Naive thymus-derived CD4-positive, alpha-beta T cell (primary cell): ENCODE measurements at regions of chr7 and their contacts with region 1.

Region 1: GRCh38 chr7:111089822-111090426 is 1.0 kb upstream of the LRRN3 start:
- DNase-seq: peak in 4 of 9 donors; percentile 43 to 50 (median 47)
- ATAC-seq: peak; percentile 70
- H3K4me3 ChIP-seq: peak overlapping the region; percentile 58
- H3K4me3 Mint-ChIP-seq: peak overlapping the region; percentile 84 to 99 (median 98)
- H3K27ac ChIP-seq: no peak overlapping the region
- H3K27ac Mint-ChIP-seq: peak overlapping the region in 5 of 9 donors; percentile 25 to 97 (median 93)
- H3K4me1 ChIP-seq: peaks cover under 1 to 13% of the 10 kb centered on the region in 2 donors
- H3K4me1 Mint-ChIP-seq: peaks cover 6 to 77% (median 60%) of the 10 kb centered on the region in 7 donors
- H3K27me3 ChIP-seq: no peaks in the 10 kb centered on the region
- H3K27me3 Mint-ChIP-seq: no peaks in the 10 kb centered on the region

Region 2: GRCh38 chr7:110595690-110596325 is 494.1 kb before region 1 on chr7:
- CTCF ChIA-PET with region 1: interaction called, 7 read pairs
- POLR2A ChIA-PET with region 1: interaction called, 4 read pairs
- intact Hi-C with region 1: loop called in 1 of 2 experiments (anchors 1 kb)
- DNase-seq: peak in 5 of 9 donors; percentile 16 to 39 (median 21)
- ATAC-seq: no peak
- H3K4me3 ChIP-seq: no peak overlapping the region
- H3K4me3 Mint-ChIP-seq: no peak overlapping the region
- H3K27ac ChIP-seq: no peak overlapping the region
- H3K27ac Mint-ChIP-seq: no peak overlapping the region
- H3K4me1 ChIP-seq: no peaks in the 10 kb centered on the region
- H3K4me1 Mint-ChIP-seq: peaks cover 0 to 15% (median 0%) of the 10 kb centered on the region in 7 donors
- H3K27me3 ChIP-seq: no peaks in the 10 kb centered on the region
- H3K27me3 Mint-ChIP-seq: peaks cover 0 to 11% (median 0%) of the 10 kb centered on the region in 5 donors

Region 3: DNA sequence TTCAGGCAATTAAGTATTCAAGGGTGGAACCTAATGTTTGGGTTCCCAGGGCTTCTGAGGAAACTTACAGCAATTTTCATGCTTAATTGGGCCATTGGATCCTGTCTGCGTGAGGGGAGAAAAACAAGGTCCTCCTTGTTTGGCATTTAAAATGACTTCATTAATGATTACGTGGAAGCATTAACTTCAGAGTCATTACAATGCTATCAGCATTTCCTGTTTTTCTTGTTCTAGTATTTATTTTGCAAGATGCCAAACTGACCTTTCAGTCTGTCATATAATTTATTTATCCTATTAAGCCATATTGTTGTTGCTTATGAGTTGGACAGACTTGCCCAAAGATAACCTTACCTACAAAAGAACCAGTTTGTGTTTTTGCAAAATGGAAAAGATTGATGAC is 323.1 kb before region 1 on chr7:
- CTCF ChIA-PET with region 1: no interaction called
- POLR2A ChIA-PET with region 1: no interaction called
- intact Hi-C with region 1: no loop called
- DNase-seq: no peak
- ATAC-seq: no peak
- H3K4me3 ChIP-seq: no peak overlapping the region
- H3K4me3 Mint-ChIP-seq: no peak overlapping the region
- H3K27ac ChIP-seq: no peak overlapping the region
- H3K27ac Mint-ChIP-seq: no peak overlapping the region
- H3K4me1 ChIP-seq: no peaks in the 10 kb centered on the region
- H3K4me1 Mint-ChIP-seq: peaks cover 0 to 2% (median 0%) of the 10 kb centered on the region in 7 donors
- H3K27me3 ChIP-seq: no peaks in the 10 kb centered on the region
- H3K27me3 Mint-ChIP-seq: peaks cover 0 to 5% (median 0%) of the 10 kb centered on the region in 5 donors

Region 4: DNA sequence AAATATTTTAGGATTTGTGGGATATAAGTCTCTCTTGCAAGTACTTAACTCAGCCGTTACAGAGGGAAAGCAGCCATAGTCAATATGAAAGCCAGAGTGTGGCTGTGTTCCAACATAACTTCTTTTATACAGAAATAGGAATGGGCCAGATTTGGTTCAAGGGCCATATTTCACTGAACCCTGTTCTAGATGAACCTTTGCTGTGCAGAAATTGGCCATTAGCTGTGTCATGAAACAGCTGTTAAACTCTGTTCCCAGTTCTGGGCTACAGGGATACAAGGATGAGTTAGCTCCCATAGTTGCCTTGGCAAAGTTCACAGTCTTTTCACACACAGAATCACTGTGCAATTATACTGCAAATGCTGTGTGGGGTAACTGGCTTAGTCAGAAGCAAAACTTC is 212.9 kb before region 1 on chr7:
- CTCF ChIA-PET with region 1: no interaction called
- POLR2A ChIA-PET with region 1: no interaction called
- intact Hi-C with region 1: loop called in 1 of 2 experiments (anchors 5 kb)
- DNase-seq: no peak
- ATAC-seq: no peak
- H3K4me3 ChIP-seq: no peak overlapping the region
- H3K4me3 Mint-ChIP-seq: no peak overlapping the region
- H3K27ac ChIP-seq: no peak overlapping the region
- H3K27ac Mint-ChIP-seq: peak overlapping the region in 1 of 9 donors; percentile 37
- H3K4me1 ChIP-seq: no peaks in the 10 kb centered on the region
- H3K4me1 Mint-ChIP-seq: peaks cover 0 to 16% (median under 1%) of the 10 kb centered on the region in 7 donors
- H3K27me3 ChIP-seq: no peaks in the 10 kb centered on the region
- H3K27me3 Mint-ChIP-seq: no peaks in the 10 kb centered on the region

Region 5: DNA sequence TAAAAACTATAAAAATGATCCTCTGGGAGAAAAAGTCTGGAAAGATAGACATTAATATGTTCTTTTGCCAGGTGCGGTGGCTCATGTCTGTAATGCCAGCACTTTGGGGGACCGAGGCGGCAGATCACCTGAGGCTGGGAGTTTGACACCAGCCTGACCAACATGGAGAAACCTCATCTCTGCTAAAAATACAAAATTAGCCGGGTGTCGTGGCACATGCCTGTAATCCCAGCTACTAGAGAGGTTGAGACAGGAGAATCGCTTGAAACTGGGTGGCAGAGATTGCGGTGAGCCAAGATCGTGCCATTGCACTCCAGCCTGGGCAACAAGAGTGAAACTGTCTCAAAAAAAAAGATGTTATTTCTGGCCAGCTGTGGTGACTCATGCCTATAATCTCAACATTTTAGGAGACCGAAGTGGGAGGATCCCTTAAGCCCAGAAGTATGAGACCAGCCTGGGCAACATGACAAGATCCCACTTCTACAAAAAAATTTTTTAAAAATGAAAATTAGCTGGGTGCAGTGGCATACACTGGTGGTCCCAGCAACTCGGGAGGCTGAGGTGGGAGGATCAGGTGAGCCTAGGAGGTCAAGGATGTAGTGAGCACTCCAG is 100.9 kb before region 1 on chr7:
- CTCF ChIA-PET with region 1: interaction called, 3 read pairs
- POLR2A ChIA-PET with region 1: interaction called, 10 read pairs
- intact Hi-C with region 1: no loop called
- DNase-seq: no peak
- ATAC-seq: no peak
- H3K4me3 ChIP-seq: no peak overlapping the region
- H3K4me3 Mint-ChIP-seq: no peak overlapping the region
- H3K27ac ChIP-seq: no peak overlapping the region
- H3K27ac Mint-ChIP-seq: no peak overlapping the region
- H3K4me1 ChIP-seq: peaks cover 0 to 15% of the 10 kb centered on the region in 2 donors
- H3K4me1 Mint-ChIP-seq: peaks cover 15 to 40% (median 33%) of the 10 kb centered on the region in 7 donors
- H3K27me3 ChIP-seq: no peaks in the 10 kb centered on the region
- H3K27me3 Mint-ChIP-seq: no peaks in the 10 kb centered on the region

Region 6: GRCh38 chr7:111012799-111013675 is 76.9 kb before region 1 on chr7:
- CTCF ChIA-PET with region 1: interaction called, 3 read pairs
- POLR2A ChIA-PET with region 1: interaction called, 14 read pairs
- intact Hi-C with region 1: loop called (anchors 1 kb)
- DNase-seq: peak in 8 of 9 donors; percentile 44 to 76 (median 70)
- ATAC-seq: peak; percentile 86
- H3K4me3 ChIP-seq: peak overlapping the region; percentile 50
- H3K4me3 Mint-ChIP-seq: peak overlapping the region in 9 of 10 donors; percentile 59 to 83 (median 76)
- H3K27ac ChIP-seq: peak overlapping the region; percentile 82
- H3K27ac Mint-ChIP-seq: peak overlapping the region in 6 of 9 donors; percentile 84 to 96 (median 90)
- H3K4me1 ChIP-seq: peaks cover 13 to 77% of the 10 kb centered on the region in 2 donors
- H3K4me1 Mint-ChIP-seq: peaks cover 38 to 76% (median 48%) of the 10 kb centered on the region in 7 donors
- H3K27me3 ChIP-seq: no peaks in the 10 kb centered on the region
- H3K27me3 Mint-ChIP-seq: no peaks in the 10 kb centered on the region

Region 7: DNA sequence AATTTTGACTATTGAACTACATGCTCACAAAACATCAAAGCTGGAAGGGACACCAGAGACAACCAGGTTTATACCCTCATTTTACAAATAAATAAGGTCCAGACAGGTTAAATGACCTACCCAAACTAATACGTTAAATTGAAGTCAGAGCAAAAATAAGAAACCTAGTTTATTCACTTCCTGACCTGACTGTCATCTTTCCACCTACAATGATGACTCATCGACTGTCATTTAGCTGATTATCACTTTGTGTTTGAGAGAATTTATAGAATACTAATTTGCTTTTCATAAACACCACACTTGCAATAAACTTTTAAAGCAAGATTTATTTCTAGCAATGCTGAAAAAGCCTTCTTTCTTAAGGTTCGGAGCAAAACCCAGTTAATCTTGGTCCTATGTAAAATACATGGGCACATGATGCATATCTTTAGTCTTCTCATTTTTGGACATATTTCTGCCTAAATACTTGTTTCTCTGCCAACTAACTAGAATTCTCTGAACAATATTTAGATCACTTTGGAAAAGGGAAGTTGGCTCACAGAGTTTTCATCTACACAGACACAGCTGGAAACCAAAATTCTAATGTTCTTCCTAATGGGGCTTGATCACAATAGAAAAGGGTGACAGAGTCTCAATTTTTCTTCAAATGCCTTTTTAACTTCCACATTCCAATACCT is 15.7 kb before region 1 on chr7:
- CTCF ChIA-PET with region 1: interaction called, 3 read pairs
- POLR2A ChIA-PET with region 1: interaction called, 69 read pairs
- intact Hi-C with region 1: loop called in 1 of 2 experiments (anchors 1 kb)
- DNase-seq: no peak
- ATAC-seq: no peak
- H3K4me3 ChIP-seq: no peak overlapping the region
- H3K4me3 Mint-ChIP-seq: peak overlapping the region in 6 of 10 donors; percentile 11 to 40 (median 19)
- H3K27ac ChIP-seq: no peak overlapping the region
- H3K27ac Mint-ChIP-seq: peak overlapping the region in 4 of 9 donors; percentile 4 to 78 (median 34)
- H3K4me1 ChIP-seq: peaks cover 5 to 34% of the 10 kb centered on the region in 2 donors
- H3K4me1 Mint-ChIP-seq: peaks cover 10 to 82% (median 73%) of the 10 kb centered on the region in 7 donors
- H3K27me3 ChIP-seq: no peaks in the 10 kb centered on the region
- H3K27me3 Mint-ChIP-seq: no peaks in the 10 kb centered on the region

Region 8: GRCh38 chr7:111138196-111138569 is 48.3 kb after region 1 on chr7:
- CTCF ChIA-PET with region 1: no interaction called
- POLR2A ChIA-PET with region 1: no interaction called
- intact Hi-C with region 1: loop called in 1 of 2 experiments (anchors 5 kb)
- DNase-seq: peak in 8 of 9 donors; percentile 40 to 73 (median 62)
- ATAC-seq: peak; percentile 85
- H3K4me3 ChIP-seq: no peak overlapping the region
- H3K4me3 Mint-ChIP-seq: peak overlapping the region in 7 of 10 donors; percentile 26 to 56 (median 45)
- H3K27ac ChIP-seq: no peak overlapping the region
- H3K27ac Mint-ChIP-seq: peak overlapping the region in 6 of 9 donors; percentile 22 to 83 (median 67)
- H3K4me1 ChIP-seq: peaks cover 6 to 14% of the 10 kb centered on the region in 2 donors
- H3K4me1 Mint-ChIP-seq: peaks cover 4 to 35% (median 20%) of the 10 kb centered on the region in 7 donors
- H3K27me3 ChIP-seq: no peaks in the 10 kb centered on the region
- H3K27me3 Mint-ChIP-seq: no peaks in the 10 kb centered on the region

Region 9: DNA sequence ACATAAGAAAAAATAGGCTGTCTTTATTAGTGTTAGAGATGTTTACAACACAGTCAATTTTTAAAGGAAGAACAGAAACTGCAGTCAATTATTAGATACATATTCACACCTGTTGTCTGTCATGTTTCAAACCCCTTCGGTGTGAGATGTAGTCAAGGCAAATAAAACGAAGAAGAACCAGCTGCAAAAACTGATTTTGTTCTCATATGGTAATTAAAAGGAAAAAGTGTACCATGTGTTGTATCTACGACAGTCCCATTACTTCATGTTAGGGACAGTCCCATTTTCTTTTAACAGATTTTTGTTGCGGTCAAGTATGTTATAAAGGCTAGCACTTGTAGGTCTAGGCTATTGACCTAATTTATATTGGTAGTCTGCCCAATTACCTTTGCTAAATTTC is 150.4 kb after region 1 on chr7:
- CTCF ChIA-PET with region 1: no interaction called
- POLR2A ChIA-PET with region 1: no interaction called
- intact Hi-C with region 1: no loop called
- DNase-seq: no peak
- ATAC-seq: no peak
- H3K4me3 ChIP-seq: no peak overlapping the region
- H3K4me3 Mint-ChIP-seq: no peak overlapping the region
- H3K27ac ChIP-seq: no peak overlapping the region
- H3K27ac Mint-ChIP-seq: no peak overlapping the region
- H3K4me1 ChIP-seq: no peaks in the 10 kb centered on the region
- H3K4me1 Mint-ChIP-seq: peaks cover 4 to 15% (median 5%) of the 10 kb centered on the region in 7 donors
- H3K27me3 ChIP-seq: no peaks in the 10 kb centered on the region
- H3K27me3 Mint-ChIP-seq: no peaks in the 10 kb centered on the region